CD8-positive, alpha-beta T cell (primary cell): ENCODE measurements at regions of chr22 and their contacts with region 1.

Region 1: DNA sequence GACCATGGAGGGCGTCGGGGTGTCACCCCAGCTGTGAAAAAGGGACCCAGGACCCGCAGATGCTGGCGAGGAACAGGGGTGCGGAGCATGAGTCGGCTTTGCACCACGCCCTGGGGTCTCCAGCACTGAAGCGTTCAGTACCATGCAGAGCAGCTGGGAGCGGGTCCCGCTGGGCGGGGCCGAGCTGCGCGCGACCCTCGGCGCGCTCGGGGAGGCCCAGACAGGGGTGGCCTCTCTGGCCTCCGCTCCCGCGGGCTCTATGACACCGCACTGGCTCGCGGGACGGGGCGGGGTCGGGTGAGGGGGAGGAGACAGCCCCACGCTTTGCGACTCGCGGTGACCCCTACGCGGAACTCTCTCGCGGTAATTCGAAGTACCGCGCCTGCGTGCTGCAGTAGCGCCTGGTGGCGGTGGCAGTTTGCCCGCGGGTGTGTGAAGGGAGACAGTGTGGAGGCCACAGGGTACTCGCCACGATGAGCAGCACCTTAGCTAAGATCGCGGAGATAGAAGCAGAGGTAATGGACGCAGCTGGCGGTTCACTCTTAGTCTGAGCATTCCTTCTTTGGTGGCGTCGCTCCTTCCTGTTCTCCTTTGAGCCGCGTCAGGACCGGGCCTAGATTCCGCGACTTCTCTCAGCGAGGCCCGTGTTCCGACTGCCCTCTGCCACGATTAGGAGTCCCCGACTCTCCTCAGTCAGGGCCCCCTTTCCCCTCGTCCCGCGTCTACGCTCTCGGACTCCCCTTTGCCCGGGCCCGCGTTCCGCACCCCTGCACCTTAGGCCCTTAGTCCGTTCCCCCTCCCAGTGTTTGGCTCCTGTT is at the start of gene DRG1:
- DNase-seq: peak; percentile 91 to 98 (median 97)
- ATAC-seq: peak; percentile 96
- H3K4me3 ChIP-seq: peak within 1 kb of the TSS; percentile 76 to 99
- H3K4me3 Mint-ChIP-seq: peak within 1 kb of the TSS; percentile 95
- H3K27ac ChIP-seq: peak within 1 kb of the TSS; percentile 82 to 87
- H3K27ac Mint-ChIP-seq: peak within 1 kb of the TSS; percentile 96
- H3K4me1 ChIP-seq: peaks cover 13% of the 10 kb centered on the region
- H3K4me1 Mint-ChIP-seq: peaks cover 31% of the 10 kb centered on the region
- H3K27me3 ChIP-seq: no peaks in the 10 kb centered on the region
- H3K27me3 Mint-ChIP-seq: no peaks in the 10 kb centered on the region
- CTCF ChIP-seq: no peak
- total RNA-seq, gene DRG1: 55.9 to 63.3 TPM

Region 2: DNA sequence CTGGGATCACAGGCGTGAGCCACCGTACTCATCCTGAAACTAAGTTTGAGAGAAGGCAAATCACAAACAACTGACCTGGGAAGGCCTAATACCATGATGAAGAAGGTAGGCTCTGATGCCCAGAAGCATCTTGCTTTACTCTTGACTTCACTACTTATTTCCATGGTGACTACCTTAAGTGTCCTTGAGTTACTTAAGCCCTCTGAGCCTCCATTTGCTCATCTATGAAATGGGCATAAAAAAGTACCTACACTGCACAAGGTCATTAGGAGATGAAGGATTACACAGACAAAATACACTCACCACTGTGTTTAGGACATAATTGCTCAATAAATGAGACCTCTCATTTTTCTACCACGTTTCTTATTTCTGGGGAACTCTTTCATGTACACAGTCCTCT is 62.3 kb after region 1 on chr22:
- CTCF ChIA-PET with region 1: no interaction called
- POLR2A ChIA-PET with region 1: no interaction called
- intact Hi-C with region 1: no loop called
- DNase-seq: no peak
- ATAC-seq: no peak
- H3K4me3 ChIP-seq: no peak overlapping the region
- H3K4me3 Mint-ChIP-seq: no peak overlapping the region
- H3K27ac ChIP-seq: no peak overlapping the region
- H3K27ac Mint-ChIP-seq: no peak overlapping the region
- H3K4me1 ChIP-seq: no peaks in the 10 kb centered on the region
- H3K4me1 Mint-ChIP-seq: peaks cover 3% of the 10 kb centered on the region
- H3K27me3 ChIP-seq: no peaks in the 10 kb centered on the region
- H3K27me3 Mint-ChIP-seq: no peaks in the 10 kb centered on the region
- CTCF ChIP-seq: no peak

Region 3: DNA sequence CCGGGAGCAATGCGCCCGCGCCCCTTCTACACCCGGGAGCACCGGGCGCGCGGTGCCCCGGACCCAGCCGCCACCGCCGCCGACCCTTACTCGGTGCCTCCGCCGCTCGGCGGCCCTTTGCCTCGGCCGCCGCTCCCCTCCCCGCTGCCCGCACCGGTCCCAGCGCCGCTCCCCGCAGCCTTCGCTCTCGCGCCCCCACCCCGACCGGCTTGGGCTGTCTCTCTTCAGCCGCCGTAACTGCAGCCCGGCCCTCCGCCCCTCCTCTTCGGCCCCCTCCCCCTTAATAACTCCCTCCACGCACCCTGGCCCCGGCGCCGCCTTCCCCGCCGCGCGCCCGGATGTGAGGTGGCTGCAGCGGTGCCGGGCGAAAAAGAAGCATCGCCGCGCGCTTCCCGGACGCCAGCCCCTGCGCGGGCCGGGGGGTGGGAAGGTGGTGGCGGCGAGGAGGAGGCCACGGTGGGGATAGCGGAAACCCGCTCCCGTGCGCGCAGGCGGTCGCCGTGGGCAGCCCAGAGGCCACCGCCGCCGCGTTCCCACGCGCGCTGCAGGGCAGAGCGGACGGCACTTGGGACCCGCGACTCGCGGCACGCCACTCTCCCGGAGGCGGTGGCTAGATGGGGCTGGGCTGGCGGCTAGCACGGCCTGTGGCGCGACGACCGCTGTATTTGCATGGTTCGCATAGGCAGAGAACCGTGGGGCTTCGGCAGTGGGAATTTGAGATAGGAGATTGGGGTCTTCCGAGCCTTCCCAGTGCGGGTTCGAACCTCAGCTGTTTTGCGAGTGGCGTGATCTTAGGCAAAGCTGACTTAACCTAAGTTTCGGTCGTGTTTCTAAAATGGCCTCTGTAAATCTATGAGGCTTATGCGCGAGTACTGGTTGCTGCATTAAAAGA is 90.4 kb after region 1 on chr22 and contains the start of gene EIF4ENIF1:
- CTCF ChIA-PET with region 1: no interaction called
- POLR2A ChIA-PET with region 1: interaction called, 3 read pairs
- intact Hi-C with region 1: loop called (anchors 2 kb)
- DNase-seq: peak; percentile 71 to 93 (median 85)
- ATAC-seq: peak; percentile 80
- H3K4me3 ChIP-seq: peak within 1 kb of the TSS; percentile 78 to 79
- H3K4me3 Mint-ChIP-seq: peak within 1 kb of the TSS; percentile 93
- H3K27ac ChIP-seq: peak within 1 kb of the TSS; percentile 92
- H3K27ac Mint-ChIP-seq: peak within 1 kb of the TSS; percentile 98
- H3K4me1 ChIP-seq: peaks cover 18% of the 10 kb centered on the region
- H3K4me1 Mint-ChIP-seq: peaks cover 47% of the 10 kb centered on the region
- H3K27me3 ChIP-seq: no peaks in the 10 kb centered on the region
- H3K27me3 Mint-ChIP-seq: no peaks in the 10 kb centered on the region
- CTCF ChIP-seq: no peak
- total RNA-seq, gene EIF4ENIF1: 12.1 to 14.5 TPM